Head of caudate nucleus (tissue), 42 donors: ENCODE measurements at regions of chr5 and their contacts with region 1.

Region 1: DNA sequence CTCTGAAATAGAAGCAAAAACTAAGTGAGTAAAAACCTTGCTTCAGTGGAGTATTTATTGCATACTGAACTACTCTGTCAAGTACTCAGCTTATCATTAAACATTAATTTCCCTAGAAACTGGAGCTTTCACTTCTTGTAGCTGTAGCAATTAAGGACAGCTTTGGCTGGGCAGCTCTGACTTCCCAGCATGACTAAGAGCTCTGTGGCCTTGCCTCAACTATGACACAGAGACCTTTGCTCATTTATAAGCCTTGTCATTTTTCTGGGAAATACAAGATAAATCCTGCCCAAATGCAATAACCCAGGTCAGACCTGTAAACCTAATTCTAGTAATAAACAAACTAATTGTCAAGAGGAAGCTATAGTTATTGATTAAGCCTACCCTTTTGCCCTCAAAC is 65.4 kb upstream of the STK32A start:
- DNase-seq: peak in 1 of 42 donors; percentile 46

Region 2: GRCh38 chr5:147101659-147102369 is 67.6 kb before region 1 on chr5:
- intact Hi-C with region 1: loop called (anchors 10 kb)
- DNase-seq: peak in 31 of 42 donors; percentile 18 to 81 (median 46)